B cell (primary cell): ENCODE measurements at regions of chr17 and their contacts with region 1.

Region 1: DNA sequence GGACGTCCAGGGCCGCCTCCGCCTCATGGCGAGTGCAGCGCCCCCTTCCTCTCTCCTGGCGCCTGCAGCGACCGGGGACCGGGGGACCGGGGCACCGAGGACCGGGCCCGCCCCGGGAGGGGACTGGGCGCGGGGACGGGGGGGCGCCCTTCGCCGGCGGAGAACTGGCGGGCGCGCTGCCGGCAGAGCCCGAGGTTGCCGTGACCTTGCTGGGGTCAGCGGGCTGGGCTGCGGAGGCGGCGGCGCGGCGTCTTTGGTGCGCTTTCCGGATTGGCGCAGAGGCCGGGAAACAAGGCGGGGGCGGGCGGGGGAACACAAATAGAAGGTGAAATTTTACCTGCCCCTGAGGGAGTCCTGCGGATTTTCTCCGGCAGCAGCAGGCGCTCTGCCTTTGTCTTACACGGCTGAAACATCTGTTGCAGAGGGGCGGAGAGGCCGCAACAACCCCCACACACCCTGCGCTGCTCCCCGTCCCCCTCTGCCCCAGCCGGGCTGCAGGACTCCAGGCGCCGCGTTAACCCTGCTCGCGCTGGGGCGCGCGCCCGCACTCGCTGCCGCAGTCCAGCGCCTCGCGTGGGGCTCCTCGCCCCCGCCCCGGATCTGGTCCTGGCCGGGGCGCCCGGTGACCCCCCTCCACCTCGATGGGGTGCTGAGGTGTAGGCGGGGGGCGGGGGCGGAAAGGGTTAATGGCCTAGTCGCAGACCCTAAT is 53.5 kb downstream of the SREBF1 start:
- DNase-seq: peak; percentile 58
- ATAC-seq: peak; percentile 14
- H3K4me3 ChIP-seq: peak overlapping the region; percentile 21 to 74 (median 54)
- H3K4me3 Mint-ChIP-seq: peak overlapping the region; percentile 90
- H3K27ac ChIP-seq: no peak overlapping the region
- H3K27ac Mint-ChIP-seq: no peak overlapping the region
- H3K4me1 ChIP-seq: peaks cover 27 to 37% of the 10 kb centered on the region in 2 donors
- H3K4me1 Mint-ChIP-seq: peaks cover 26% of the 10 kb centered on the region
- H3K27me3 ChIP-seq: peaks cover 0 to 16% (median 3%) of the 10 kb centered on the region in 4 experiments
- H3K27me3 Mint-ChIP-seq: peaks cover 5% of the 10 kb centered on the region
- CTCF ChIP-seq: peak; percentile 24

Region 2: GRCh38 chr17:17729620-17730249 is 53.5 kb before region 1 on chr17:
- CTCF ChIA-PET with region 1: interaction called, 3 read pairs
- POLR2A ChIA-PET with region 1: no interaction called
- intact Hi-C with region 1: loop called (anchors 5 kb)
- DNase-seq: peak; percentile 76
- ATAC-seq: peak; percentile 90
- H3K4me3 ChIP-seq: no peak overlapping the region
- H3K4me3 Mint-ChIP-seq: no peak overlapping the region
- H3K27ac ChIP-seq: no peak overlapping the region
- H3K27ac Mint-ChIP-seq: peak overlapping the region; percentile 12
- H3K4me1 ChIP-seq: peaks cover 9 to 20% of the 10 kb centered on the region in 2 donors
- H3K4me1 Mint-ChIP-seq: peaks cover 23% of the 10 kb centered on the region
- H3K27me3 ChIP-seq: no peaks in the 10 kb centered on the region
- H3K27me3 Mint-ChIP-seq: no peaks in the 10 kb centered on the region
- CTCF ChIP-seq: peak; percentile 81

Region 3: GRCh38 chr17:17766077-17766743 is 17.1 kb before region 1 on chr17:
- CTCF ChIA-PET with region 1: interaction called, 3 read pairs
- POLR2A ChIA-PET with region 1: interaction called, 3 read pairs
- intact Hi-C with region 1: loop called (anchors 1 kb)
- DNase-seq: peak; percentile 79
- ATAC-seq: peak; percentile 88
- H3K4me3 ChIP-seq: peak overlapping the region in 1 of 5 experiments; percentile 10
- H3K4me3 Mint-ChIP-seq: peak overlapping the region; percentile 78
- H3K27ac ChIP-seq: peak overlapping the region; percentile 60 to 80
- H3K27ac Mint-ChIP-seq: peak overlapping the region; percentile 96
- H3K4me1 ChIP-seq: peaks cover 29 to 43% of the 10 kb centered on the region in 2 donors
- H3K4me1 Mint-ChIP-seq: peaks cover 36% of the 10 kb centered on the region
- H3K27me3 ChIP-seq: no peaks in the 10 kb centered on the region
- H3K27me3 Mint-ChIP-seq: no peaks in the 10 kb centered on the region
- CTCF ChIP-seq: no peak

Region 4: DNA sequence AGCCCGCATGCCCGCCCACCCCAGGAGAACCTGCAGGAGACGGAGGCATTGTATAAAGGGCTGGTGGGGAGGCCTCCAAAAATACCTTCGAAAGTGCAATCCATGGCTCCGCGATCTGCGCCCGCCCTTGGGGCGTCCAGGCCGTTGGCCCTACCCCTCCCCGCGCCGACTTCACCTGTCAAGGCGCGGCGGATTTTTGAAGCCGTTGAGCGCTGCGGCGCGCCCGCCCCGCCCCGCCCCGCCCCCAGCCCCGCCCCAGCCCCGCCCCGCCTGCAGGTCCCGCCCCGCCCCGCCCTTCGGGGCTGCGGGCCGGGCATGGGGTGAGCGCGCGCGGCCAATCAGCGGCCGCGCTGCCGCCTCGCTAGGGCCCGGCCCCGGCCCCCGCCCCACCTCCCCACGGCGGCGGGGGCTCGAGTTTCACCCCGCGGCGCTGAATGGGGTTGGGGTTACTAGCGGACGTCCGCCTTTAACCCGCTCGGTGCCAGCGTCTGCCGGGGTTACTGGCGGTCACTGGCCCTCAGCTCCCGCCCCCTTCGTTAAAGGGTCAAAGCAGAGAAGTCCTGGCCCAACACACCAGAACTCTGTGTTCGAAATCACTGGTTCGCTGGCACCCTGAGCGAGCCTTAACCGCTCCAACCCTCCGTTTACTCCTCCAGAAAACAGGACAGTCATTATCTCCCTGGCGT is 40.3 kb after region 1 on chr17:
- CTCF ChIA-PET with region 1: no interaction called
- POLR2A ChIA-PET with region 1: no interaction called
- intact Hi-C with region 1: no loop called
- DNase-seq: peak; percentile 86
- ATAC-seq: peak; percentile 93
- H3K4me3 ChIP-seq: peak overlapping the region; percentile 35 to 82 (median 56)
- H3K4me3 Mint-ChIP-seq: peak overlapping the region; percentile 86
- H3K27ac ChIP-seq: peak overlapping the region; percentile 16 to 56
- H3K27ac Mint-ChIP-seq: peak overlapping the region; percentile 67
- H3K4me1 ChIP-seq: peaks cover 28 to 41% of the 10 kb centered on the region in 2 donors
- H3K4me1 Mint-ChIP-seq: peaks cover 52% of the 10 kb centered on the region
- H3K27me3 ChIP-seq: no peaks in the 10 kb centered on the region
- H3K27me3 Mint-ChIP-seq: no peaks in the 10 kb centered on the region
- CTCF ChIP-seq: no peak